ENCODE measurements at regions of chr7 and their contacts with region 1.

Region 1: DNA sequence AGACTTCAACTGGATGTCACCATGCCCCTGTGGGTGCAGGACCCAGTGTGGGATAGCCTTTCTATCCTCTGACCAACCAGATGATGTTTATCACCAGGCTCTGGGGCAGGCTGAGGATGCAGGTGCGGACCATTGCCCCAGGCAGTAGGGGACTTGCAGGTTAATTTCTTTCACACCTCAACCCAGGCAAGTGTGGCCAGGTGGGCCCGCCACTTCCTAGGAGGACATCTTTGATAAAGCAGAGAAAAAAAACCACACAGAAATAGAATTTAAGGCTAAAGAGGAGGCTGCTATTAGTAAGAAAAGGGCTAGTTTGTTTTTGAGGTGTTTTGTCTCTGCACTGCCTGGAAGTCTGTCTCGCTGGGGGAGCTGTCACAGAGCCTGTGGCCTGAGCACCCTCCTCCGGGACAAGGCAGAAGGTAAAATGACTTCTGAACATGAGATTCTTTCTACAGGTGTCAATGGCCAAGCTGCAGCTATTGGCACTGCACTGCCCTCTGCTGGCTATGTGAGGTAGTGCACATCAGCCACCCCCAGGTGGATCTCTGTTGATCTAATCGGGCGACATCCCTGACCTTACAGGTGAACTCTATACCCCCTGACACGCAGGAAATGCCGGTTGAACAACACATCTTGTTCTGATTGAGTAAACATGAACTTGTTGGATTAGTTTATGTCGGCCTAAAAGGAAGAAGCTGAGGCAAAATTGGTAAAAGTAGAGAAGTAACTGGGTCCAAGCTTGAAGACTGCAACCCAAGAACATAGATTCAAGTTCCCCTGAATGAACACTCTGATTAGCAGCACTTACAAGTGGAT is 21.0 kb downstream of the UPP1 start:
- DNase-seq: peak; percentile 68 to 77
- ATAC-seq: peak; percentile 66 to 82 (median 75)
- H3K4me3 ChIP-seq: no peak overlapping the region
- H3K27ac ChIP-seq: peak overlapping the region in 1 of 10 donors; percentile 40
- H3K4me1 ChIP-seq: peaks cover 0 to 9% (median 0%) of the 10 kb centered on the region in 9 donors
- H3K27me3 ChIP-seq: no peaks in the 10 kb centered on the region
- CTCF ChIP-seq: peak; percentile 97 to 100 (median 99)

Region 2: GRCh38 chr7:47807756-47808155 is 302.3 kb before region 1 on chr7:
- intact Hi-C with region 1: loop called in 1 of 10 experiments (anchors 10 kb)
- DNase-seq: no peak
- ATAC-seq: no peak
- H3K4me3 ChIP-seq: no peak overlapping the region
- H3K27ac ChIP-seq: peak overlapping the region in 1 of 10 donors; percentile 65
- H3K4me1 ChIP-seq: peaks cover 0 to 40% (median 6%) of the 10 kb centered on the region in 9 donors
- H3K27me3 ChIP-seq: no peaks in the 10 kb centered on the region
- CTCF ChIP-seq: peak in 1 of 9 donors; percentile 21

Region 3: DNA sequence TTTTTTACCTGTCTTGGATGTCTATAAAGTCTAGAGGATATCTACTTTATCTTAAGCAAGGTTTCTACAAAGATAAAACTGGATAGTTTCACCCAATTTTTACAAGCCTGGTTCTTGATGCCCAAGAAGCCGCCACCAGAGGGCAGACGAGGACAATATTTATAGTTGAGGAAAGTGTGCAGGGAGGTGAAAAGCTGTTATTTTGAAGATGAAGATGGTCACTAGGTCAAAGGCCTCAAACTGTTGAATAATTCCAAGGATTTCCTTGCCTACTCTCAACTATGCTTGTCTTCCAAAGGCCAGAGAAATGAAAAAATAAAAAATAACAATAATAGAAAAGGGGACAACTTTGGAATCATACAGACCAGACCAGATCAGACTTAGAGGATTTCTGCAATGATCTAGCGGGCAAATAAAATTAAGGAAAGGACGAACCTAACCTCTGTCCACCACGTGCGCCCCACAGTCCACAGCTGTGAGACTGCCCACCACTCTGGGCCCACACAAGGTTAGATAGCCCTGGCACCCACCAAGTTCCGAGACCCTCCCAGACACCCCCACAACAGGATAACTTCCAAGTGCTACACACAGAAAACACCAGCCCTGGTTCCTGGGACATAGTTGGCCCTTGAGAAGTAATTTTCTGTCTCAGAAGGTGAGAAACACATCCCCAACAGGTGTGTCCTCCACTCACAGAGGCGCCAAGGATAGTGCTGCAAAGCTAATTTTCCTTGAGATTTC is 164.6 kb before region 1 on chr7:
- intact Hi-C with region 1: loop called in 8 of 10 experiments (anchors 1 to 5 kb)
- DNase-seq: peak; percentile 78 to 82
- ATAC-seq: peak in 1 of 8 donors; percentile 35
- H3K4me3 ChIP-seq: peak overlapping the region in 1 of 10 donors; percentile 9
- H3K27ac ChIP-seq: peak overlapping the region in 9 of 10 donors; percentile 53 to 97 (median 79)
- H3K4me1 ChIP-seq: peaks cover 8 to 91% (median 42%) of the 10 kb centered on the region in 9 donors
- H3K27me3 ChIP-seq: no peaks in the 10 kb centered on the region
- CTCF ChIP-seq: peak; percentile 70 to 99 (median 83)

Region 4: GRCh38 chr7:47991741-47992311 is 118.2 kb before region 1 on chr7:
- intact Hi-C with region 1: loop called (anchors 1 to 5 kb)
- DNase-seq: peak; percentile 88
- ATAC-seq: peak; percentile 99 to 100 (median 99)
- H3K4me3 ChIP-seq: peak overlapping the region; percentile 26 to 68 (median 57)
- H3K27ac ChIP-seq: peak overlapping the region in 9 of 10 donors; percentile 14 to 83 (median 51)
- H3K4me1 ChIP-seq: peaks cover 0 to 13% (median 5%) of the 10 kb centered on the region in 9 donors
- H3K27me3 ChIP-seq: no peaks in the 10 kb centered on the region
- CTCF ChIP-seq: peak; percentile 43 to 98 (median 68)

Region 5: GRCh38 chr7:48035301-48035966 is 74.6 kb before region 1 on chr7 and contains the start of gene C7orf57:
- intact Hi-C with region 1: loop called in 3 of 10 experiments (anchors 1 to 10 kb)
- DNase-seq: peak; percentile 92 to 93
- ATAC-seq: peak; percentile 98 to 100 (median 100)
- H3K4me3 ChIP-seq: peak within 1 kb of the TSS; percentile 41 to 84 (median 62)
- H3K27ac ChIP-seq: no peak within 1 kb of the TSS
- H3K4me1 ChIP-seq: peaks cover 3 to 17% (median 13%) of the 10 kb centered on the region in 9 donors
- H3K27me3 ChIP-seq: peaks cover 0 to 68% (median 18%) of the 10 kb centered on the region in 7 donors
- CTCF ChIP-seq: peak in 6 of 9 donors; percentile 22 to 61 (median 48)
- total RNA-seq, gene C7orf57: 0.24 TPM in 1 of 10 donors, not detected in the others

Region 6: GRCh38 chr7:48058990-48059389 is 51.1 kb before region 1 on chr7:
- intact Hi-C with region 1: no loop called
- DNase-seq: no peak
- ATAC-seq: no peak
- H3K4me3 ChIP-seq: no peak overlapping the region
- H3K27ac ChIP-seq: no peak overlapping the region
- H3K4me1 ChIP-seq: no peaks in the 10 kb centered on the region
- H3K27me3 ChIP-seq: no peaks in the 10 kb centered on the region
- CTCF ChIP-seq: no peak

Region 7: DNA sequence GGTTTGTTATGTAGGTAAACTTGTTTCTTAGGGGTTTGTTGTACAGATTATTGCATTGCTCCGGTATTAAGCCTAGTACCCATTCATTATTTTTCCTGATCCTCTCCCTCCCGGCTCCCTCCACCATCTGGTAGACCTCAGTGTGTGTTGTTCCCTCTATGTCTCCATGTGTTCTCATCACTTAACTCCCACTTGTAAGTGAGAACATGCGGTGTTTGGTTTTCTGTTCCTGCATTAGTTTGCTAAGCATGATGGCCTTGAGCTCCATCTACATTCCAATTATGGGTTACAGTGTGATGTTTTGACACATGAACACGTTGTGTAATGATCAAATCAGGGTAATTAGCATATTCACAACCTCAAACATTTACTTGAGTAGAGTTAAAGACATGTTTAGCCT is 298.7 kb after region 1 on chr7:
- intact Hi-C with region 1: no loop called
- DNase-seq: no peak
- ATAC-seq: no peak
- H3K4me3 ChIP-seq: no peak overlapping the region
- H3K27ac ChIP-seq: no peak overlapping the region
- H3K4me1 ChIP-seq: no peaks in the 10 kb centered on the region
- H3K27me3 ChIP-seq: no peaks in the 10 kb centered on the region
- CTCF ChIP-seq: no peak